BJ (cell line): ENCODE measurements at regions of chr3 and their contacts with region 1.

Region 1: DNA sequence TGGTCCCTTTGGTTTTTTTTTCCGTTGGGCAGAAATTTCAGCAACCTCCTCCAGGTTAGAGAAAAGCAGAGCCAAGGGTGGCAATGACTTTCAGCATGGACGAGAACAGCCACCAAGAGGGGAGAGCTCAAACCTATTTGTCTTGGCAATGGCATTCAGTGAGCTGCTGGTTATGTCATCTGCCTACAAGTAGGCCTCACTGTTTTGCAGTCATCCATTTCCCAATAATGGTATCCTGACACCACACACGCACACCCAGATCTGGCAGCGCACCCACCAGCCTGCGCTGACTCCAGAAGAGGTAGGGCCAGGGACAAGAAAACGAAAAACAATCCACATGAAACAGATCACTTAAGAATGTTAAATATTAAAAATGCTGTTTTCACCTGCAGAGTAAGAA is 92.3 kb downstream of the MAGI1 start:
- DNase-seq: no peak
- H3K4me3 ChIP-seq: no peak overlapping the region
- H3K27me3 ChIP-seq: no peaks in the 10 kb centered on the region
- CTCF ChIP-seq: no peak

Region 2: DNA sequence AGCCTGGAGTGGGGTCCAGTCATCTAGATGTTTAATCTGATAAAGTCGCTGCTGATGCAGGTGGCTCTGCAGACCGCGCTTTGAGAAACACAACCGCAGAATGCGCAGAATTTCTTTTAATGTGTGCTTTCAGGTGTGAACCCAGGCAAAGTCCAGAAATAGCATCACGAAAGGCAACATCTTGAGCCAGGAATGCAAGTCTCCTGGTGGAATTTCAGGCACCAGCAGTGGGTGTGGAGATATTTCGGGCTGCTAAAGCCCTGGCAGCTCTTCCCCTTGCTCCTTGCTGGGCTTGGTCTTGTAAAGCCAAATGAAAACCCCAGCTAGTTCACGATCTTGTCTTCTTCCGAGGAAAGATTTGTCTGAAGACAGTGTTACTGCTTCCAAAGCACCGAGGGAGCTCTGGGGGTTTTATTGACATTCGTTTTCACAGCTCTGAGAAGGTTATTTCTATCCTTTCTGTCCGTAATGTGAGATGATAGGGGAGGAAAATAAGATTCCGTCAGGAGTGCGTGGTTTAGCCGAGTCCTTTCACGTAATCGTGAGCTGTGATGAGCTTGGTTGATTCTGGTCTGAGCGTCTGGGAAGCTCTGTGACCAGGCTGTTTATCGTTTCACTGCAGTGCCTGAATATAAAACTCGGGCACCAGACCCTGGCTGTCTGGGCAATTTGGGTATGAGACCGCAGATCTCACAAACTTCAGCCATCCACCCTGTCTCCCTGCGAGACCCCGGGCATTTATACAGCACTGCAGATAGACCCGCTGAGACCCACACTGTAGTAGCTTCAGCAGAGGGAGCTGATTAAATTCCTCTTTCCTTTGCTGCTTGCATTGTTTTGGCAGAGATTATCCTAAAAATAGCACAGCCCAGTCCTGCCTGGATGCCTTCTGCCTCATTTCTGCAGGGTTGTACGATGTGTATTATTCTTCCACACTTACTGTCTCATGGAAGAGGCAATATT is 207.3 kb after region 1 on chr3:
- CTCF ChIA-PET with region 1: no interaction called
- POLR2A ChIA-PET with region 1: interaction called, 19 read pairs
- DNase-seq: no peak
- H3K4me3 ChIP-seq: peak overlapping the region; percentile 41
- H3K27me3 ChIP-seq: peaks cover 5% of the 10 kb centered on the region
- CTCF ChIP-seq: no peak